Ascending aorta (tissue), 2 donors: ENCODE measurements at regions of chrX and their contacts with region 1.

Region 1: GRCh38 chrX:88613338-88613737 is 133.7 kb upstream of the CPXCR1 start:
- DNase-seq: no peak
- H3K4me3 ChIP-seq: no peak overlapping the region
- H3K27ac ChIP-seq: no peak overlapping the region
- H3K4me1 ChIP-seq: no peaks in the 10 kb centered on the region
- H3K27me3 ChIP-seq: no peaks in the 10 kb centered on the region
- CTCF ChIP-seq: peak in 2 of 3 experiments; percentile 14 to 32

Region 2: DNA sequence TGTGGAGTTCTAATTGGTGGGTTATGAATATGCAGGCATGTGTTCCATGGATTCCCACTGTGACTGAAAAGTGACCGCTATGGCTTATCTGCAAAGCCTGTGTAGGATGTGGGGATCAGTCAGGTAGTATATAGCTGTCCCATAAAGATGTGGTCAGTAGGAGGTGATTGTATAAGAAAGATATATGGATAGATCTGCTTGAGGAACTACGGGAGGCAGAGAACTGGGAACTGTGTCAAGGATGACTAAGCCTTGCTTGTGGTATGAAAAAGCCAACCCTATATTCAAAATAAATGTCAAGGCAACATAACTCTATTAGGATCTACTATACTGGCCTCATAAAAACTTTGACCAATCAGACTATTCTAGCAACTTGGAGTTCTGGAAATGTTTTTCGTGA is 910.5 kb before region 1 on chrX:
- intact Hi-C with region 1: loop called (anchors 5 kb)
- DNase-seq: no peak
- H3K4me3 ChIP-seq: no peak overlapping the region
- H3K27ac ChIP-seq: no peak overlapping the region
- H3K4me1 ChIP-seq: no peaks in the 10 kb centered on the region
- H3K27me3 ChIP-seq: no peaks in the 10 kb centered on the region
- CTCF ChIP-seq: no peak